Activated CD8-positive, alpha-beta T cell treated with anti-CD3 and anti-CD28 coated beads for 36 hours (primary cell): ENCODE measurements at regions of chr3 and their contacts with region 1.

Region 1: GRCh38 chr3:32138545-32139104 is 32.2 kb downstream of the GPD1L start:
- DNase-seq: peak; percentile 2
- ATAC-seq: no peak
- H3K4me3 Mint-ChIP-seq: no peak overlapping the region
- H3K27ac Mint-ChIP-seq: no peak overlapping the region
- H3K4me1 Mint-ChIP-seq: peaks cover 19% of the 10 kb centered on the region
- H3K27me3 Mint-ChIP-seq: no peaks in the 10 kb centered on the region
- CTCF ChIP-seq: no peak

Region 2: DNA sequence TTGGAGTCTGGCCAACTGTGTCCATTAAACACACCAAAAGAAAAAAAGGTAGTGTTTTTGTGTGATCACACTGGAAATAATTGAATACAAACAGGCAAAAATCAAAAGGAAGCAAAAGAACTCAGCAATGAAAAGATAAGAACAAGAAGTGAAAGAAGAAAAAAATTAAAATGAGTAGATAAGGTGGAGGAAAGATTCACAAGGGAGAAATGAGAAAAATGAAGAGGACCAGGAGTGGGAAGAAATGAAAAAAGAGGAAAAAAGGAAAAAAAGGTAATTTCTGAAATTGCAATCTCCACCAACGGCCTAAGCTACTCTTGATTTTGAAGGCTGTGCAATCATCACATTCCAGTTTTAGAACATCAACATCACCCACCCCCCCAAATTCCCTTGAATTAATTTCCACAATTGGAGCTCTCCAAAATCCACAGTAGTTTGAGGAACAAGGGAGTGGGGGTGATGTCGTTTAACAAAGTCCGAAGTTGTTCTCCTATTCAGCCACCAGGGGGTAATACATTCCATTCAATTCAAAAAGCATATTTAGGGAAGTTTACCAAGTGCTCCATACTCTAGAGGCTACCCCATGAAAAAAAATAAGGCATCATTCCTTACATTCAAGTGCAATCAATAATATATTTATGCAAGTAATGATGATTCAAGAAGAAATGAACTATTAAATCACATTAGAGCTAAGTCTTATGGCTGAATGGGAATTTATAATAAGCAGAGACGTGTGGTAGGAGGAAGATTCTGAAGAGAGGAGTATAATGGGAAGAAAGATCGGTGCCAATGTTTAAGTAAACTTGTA is 119.7 kb before region 1 on chr3:
- CTCF ChIA-PET with region 1: interaction called, 61 read pairs
- POLR2A ChIA-PET with region 1: no interaction called
- intact Hi-C with region 1: no loop called
- DNase-seq: no peak
- ATAC-seq: no peak
- H3K4me3 Mint-ChIP-seq: no peak overlapping the region
- H3K27ac Mint-ChIP-seq: no peak overlapping the region
- H3K4me1 Mint-ChIP-seq: no peaks in the 10 kb centered on the region
- H3K27me3 Mint-ChIP-seq: peaks cover 2% of the 10 kb centered on the region
- CTCF ChIP-seq: peak; percentile 78

Region 3: GRCh38 chr3:32037929-32038267 is 100.7 kb before region 1 on chr3:
- CTCF ChIA-PET with region 1: no interaction called
- POLR2A ChIA-PET with region 1: no interaction called
- intact Hi-C with region 1: no loop called
- DNase-seq: no peak
- ATAC-seq: no peak
- H3K4me3 Mint-ChIP-seq: no peak overlapping the region
- H3K27ac Mint-ChIP-seq: no peak overlapping the region
- H3K4me1 Mint-ChIP-seq: no peaks in the 10 kb centered on the region
- H3K27me3 Mint-ChIP-seq: peaks cover 10% of the 10 kb centered on the region
- CTCF ChIP-seq: no peak

Region 4: DNA sequence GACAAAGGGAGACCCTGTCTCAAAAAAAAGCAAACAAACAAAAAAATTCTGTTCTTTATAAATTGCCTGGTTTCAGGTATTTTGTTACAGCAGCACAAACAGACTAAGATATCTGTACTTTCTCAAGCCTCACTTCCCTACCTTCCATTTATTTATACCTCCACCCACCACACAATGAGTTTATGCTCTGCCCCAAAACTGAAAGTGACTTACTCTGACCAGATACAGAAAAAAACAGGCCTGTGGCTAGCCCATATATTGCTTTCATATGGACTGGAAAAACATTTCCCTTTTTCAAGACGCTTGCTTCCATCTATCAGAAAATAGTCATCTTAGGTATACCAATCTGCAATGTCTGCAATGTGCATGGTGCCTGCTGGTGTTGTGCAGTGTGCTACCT is 40.9 kb before region 1 on chr3:
- CTCF ChIA-PET with region 1: no interaction called
- POLR2A ChIA-PET with region 1: no interaction called
- intact Hi-C with region 1: no loop called
- DNase-seq: no peak
- ATAC-seq: no peak
- H3K4me3 Mint-ChIP-seq: no peak overlapping the region
- H3K27ac Mint-ChIP-seq: no peak overlapping the region
- H3K4me1 Mint-ChIP-seq: peaks cover 3% of the 10 kb centered on the region
- H3K27me3 Mint-ChIP-seq: peaks cover 1% of the 10 kb centered on the region
- CTCF ChIP-seq: no peak

Region 5: DNA sequence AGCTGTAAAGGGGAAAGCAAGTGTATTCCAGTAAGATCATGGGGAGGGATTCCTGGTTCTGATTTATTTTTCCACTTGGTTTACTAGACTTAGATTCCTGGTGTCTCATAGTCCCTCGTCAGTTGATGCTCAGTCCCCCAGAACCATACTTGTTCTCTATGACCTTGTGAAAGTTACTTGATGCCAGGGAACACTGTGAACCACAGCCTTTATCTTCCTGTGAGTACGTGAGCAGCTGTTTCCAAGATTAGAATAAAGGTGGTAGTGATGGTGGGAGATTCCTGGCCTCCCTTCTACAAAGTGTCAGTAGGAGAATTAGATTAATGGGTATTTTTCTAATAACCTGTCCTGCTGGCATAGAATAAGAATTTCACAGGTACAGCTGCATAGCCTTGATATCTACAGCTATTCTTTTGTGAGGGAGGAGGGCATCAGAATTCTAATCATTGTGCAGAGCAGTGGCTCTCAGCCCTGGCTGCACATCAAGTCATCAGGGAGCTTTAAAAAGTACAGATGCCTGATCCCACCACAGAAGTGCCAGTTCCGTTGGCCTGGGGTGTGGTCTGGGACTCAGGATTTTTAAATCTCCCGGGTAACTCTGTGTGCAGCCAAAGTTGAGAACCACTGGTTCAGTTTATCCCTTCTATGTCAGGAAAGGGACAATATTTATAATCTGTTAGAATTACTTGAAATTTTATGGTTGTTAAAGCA is 12.2 kb before region 1 on chr3:
- CTCF ChIA-PET with region 1: no interaction called
- POLR2A ChIA-PET with region 1: no interaction called
- intact Hi-C with region 1: no loop called
- DNase-seq: no peak
- ATAC-seq: no peak
- H3K4me3 Mint-ChIP-seq: no peak overlapping the region
- H3K27ac Mint-ChIP-seq: no peak overlapping the region
- H3K4me1 Mint-ChIP-seq: peaks cover 6% of the 10 kb centered on the region
- H3K27me3 Mint-ChIP-seq: no peaks in the 10 kb centered on the region
- CTCF ChIP-seq: no peak